ENCODE measurements at regions of chr12 and their contacts with region 1.

Region 1: GRCh38 chr12:54579696-54580333 is 8.6 kb downstream of the PPP1R1A start:
- DNase-seq: peak; percentile 56 to 81 (median 70)
- H3K4me3 ChIP-seq: no peak overlapping the region
- H3K4me3 Mint-ChIP-seq: no peak overlapping the region
- H3K27ac ChIP-seq: no peak overlapping the region
- H3K27ac Mint-ChIP-seq: peak overlapping the region in 1 of 8 donors; percentile 72
- H3K4me1 ChIP-seq: no peaks in the 10 kb centered on the region
- H3K4me1 Mint-ChIP-seq: peaks cover 4 to 11% (median 7%) of the 10 kb centered on the region in 3 donors
- H3K27me3 ChIP-seq: peaks cover 5% of the 10 kb centered on the region
- H3K27me3 Mint-ChIP-seq: peaks cover 0 to 13% of the 10 kb centered on the region in 2 donors

Region 2: DNA sequence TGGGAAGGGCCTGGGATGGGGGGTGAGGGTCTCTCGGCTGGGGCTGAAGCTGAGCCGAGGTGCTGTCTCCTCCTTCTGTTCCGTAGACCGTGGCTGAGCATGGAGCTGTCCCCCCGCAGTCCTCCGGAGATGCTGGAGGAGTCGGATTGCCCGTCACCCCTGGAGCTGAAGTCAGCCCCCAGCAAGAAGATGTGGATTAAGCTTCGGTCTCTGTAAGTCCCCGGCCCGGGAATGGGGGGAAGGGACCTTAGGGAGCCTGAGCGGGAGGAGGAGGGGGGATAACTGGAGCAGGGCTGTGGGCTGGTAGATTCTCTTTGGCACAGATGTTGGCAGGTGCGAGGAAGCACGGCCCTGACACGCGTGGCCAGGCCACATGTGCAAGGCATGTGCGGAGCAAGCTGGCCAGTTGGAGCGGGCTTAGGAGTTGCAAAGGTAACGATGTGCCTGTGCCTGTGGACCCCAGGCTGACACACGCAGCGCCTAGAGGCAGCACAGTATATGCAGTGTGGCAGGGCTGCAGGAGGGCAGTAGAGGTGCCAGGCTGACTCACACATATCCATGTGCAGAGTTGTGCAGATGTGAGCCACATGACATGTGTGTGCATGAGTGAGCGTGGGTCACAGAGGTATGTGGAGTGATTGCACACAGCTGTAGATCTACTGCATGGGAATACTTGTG is 29.9 kb before region 1 on chr12:
- CTCF ChIA-PET with region 1: interaction called, 12 read pairs
- POLR2A ChIA-PET with region 1: no interaction called
- DNase-seq: peak in 1 of 5 donors; percentile 6
- H3K4me3 ChIP-seq: peak overlapping the region; percentile 40
- H3K4me3 Mint-ChIP-seq: peak overlapping the region; percentile 22 to 86 (median 84)
- H3K27ac ChIP-seq: no peak overlapping the region
- H3K27ac Mint-ChIP-seq: peak overlapping the region in 2 of 8 donors; percentile 11 to 80
- H3K4me1 ChIP-seq: peaks cover 14% of the 10 kb centered on the region
- H3K4me1 Mint-ChIP-seq: peaks cover 15 to 28% (median 26%) of the 10 kb centered on the region in 3 donors
- H3K27me3 ChIP-seq: no peaks in the 10 kb centered on the region
- H3K27me3 Mint-ChIP-seq: peaks cover 5 to 20% of the 10 kb centered on the region in 2 donors

Region 3: DNA sequence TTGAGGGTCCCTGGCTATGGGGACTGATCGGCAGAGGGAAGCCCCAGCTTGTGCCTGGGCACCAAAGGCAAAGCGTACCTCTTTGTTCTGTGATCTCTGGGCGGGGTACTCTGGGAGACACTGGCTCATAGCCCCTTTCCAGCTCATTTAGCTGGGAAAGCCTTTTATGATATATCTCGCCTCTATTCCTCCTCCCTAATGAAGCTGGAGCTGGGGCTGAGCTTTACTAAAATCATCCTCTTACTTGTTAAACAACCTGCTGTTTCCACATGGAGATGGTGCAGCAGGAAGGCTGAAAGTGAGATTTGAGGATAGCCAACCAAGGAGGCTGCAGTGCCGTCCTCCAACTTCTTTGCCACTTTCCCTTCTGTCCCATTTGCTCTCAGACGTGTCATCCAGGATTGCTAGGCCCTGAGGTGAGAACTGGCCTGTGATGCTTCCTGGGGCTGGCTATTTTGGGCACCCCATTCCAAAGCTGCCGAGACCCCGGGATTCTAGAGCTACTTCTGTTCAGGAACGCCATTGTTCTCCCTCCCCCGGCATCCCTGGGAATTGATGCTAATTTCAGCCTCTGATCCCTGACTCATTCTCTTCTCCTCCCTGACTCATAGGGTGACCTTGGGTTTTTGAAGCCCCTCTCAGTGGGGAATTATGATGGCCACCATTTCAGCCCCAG is 14.4 kb before region 1 on chr12:
- CTCF ChIA-PET with region 1: interaction called, 22 read pairs
- POLR2A ChIA-PET with region 1: no interaction called
- DNase-seq: no peak
- H3K4me3 ChIP-seq: no peak overlapping the region
- H3K4me3 Mint-ChIP-seq: no peak overlapping the region
- H3K27ac ChIP-seq: no peak overlapping the region
- H3K27ac Mint-ChIP-seq: peak overlapping the region in 1 of 8 donors; percentile 60
- H3K4me1 ChIP-seq: peaks cover 9% of the 10 kb centered on the region
- H3K4me1 Mint-ChIP-seq: peaks cover 9 to 14% (median 13%) of the 10 kb centered on the region in 3 donors
- H3K27me3 ChIP-seq: no peaks in the 10 kb centered on the region
- H3K27me3 Mint-ChIP-seq: no peaks in the 10 kb centered on the region

Region 4: GRCh38 chr12:54596526-54596946 is 16.7 kb after region 1 on chr12:
- CTCF ChIA-PET with region 1: interaction called, 26 read pairs
- POLR2A ChIA-PET with region 1: no interaction called
- DNase-seq: peak in 3 of 5 donors; percentile 6 to 32 (median 30)
- H3K4me3 ChIP-seq: no peak overlapping the region
- H3K4me3 Mint-ChIP-seq: no peak overlapping the region
- H3K27ac ChIP-seq: no peak overlapping the region
- H3K27ac Mint-ChIP-seq: no peak overlapping the region
- H3K4me1 ChIP-seq: peaks cover 4% of the 10 kb centered on the region
- H3K4me1 Mint-ChIP-seq: no peaks in the 10 kb centered on the region
- H3K27me3 ChIP-seq: peaks cover 3% of the 10 kb centered on the region
- H3K27me3 Mint-ChIP-seq: peaks cover 14 to 39% of the 10 kb centered on the region in 2 donors

Region 5: DNA sequence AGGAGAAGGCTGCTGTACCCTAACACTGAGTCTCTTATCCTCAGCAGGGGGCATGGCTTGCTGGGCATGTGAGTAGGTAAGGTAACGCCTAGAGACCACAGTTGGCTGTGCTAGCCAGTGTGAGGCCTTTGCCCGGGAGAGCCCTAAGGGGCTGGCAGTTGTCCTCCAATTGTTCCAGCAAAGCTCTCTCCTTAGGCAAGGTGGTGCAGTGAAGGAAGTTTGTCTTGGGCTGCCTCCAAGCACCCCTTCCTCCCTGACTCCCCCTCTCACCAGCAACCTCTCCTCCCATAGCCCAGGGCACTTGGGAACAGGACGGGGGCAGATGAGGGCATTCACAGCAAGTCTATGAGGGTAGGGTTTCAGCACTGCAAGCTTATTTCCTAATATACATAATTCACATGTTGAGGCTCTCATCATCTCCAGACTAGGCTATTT is 31.9 kb after region 1 on chr12:
- CTCF ChIA-PET with region 1: no interaction called
- POLR2A ChIA-PET with region 1: no interaction called
- DNase-seq: no peak
- H3K4me3 ChIP-seq: no peak overlapping the region
- H3K4me3 Mint-ChIP-seq: no peak overlapping the region
- H3K27ac ChIP-seq: no peak overlapping the region
- H3K27ac Mint-ChIP-seq: no peak overlapping the region
- H3K4me1 ChIP-seq: no peaks in the 10 kb centered on the region
- H3K4me1 Mint-ChIP-seq: peaks cover 0 to 1% (median 0%) of the 10 kb centered on the region in 3 donors
- H3K27me3 ChIP-seq: no peaks in the 10 kb centered on the region
- H3K27me3 Mint-ChIP-seq: peaks cover 17 to 47% of the 10 kb centered on the region in 2 donors